ENCODE measurements at regions of chr5 and their contacts with region 1.

Region 1: DNA sequence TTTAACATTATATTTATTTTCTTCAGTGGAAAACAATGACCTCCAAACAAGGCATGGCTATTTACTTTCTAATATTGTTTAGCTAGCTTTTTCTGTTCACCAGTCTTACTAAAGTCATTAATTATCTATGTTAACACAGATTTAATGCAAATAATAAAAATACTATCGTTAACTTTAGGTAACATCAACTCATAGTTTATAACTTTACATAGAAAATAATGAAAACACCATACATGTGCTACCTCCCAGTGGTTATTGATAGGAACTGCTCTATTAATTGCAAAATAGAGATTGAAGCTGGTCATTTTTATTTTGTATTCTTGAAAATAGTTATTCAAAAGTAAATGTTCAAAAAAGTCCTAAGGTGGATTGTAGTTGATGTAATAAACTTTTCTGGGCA is 78.3 kb upstream of the HCN1 start:
- DNase-seq: no peak
- ATAC-seq: no peak

Region 2: GRCh38 chr5:44943647-44944046 is 830.9 kb before region 1 on chr5:
- intact Hi-C with region 1: loop called in 1 of 2 experiments (anchors 10 kb)
- DNase-seq: no peak
- ATAC-seq: no peak

Region 3: DNA sequence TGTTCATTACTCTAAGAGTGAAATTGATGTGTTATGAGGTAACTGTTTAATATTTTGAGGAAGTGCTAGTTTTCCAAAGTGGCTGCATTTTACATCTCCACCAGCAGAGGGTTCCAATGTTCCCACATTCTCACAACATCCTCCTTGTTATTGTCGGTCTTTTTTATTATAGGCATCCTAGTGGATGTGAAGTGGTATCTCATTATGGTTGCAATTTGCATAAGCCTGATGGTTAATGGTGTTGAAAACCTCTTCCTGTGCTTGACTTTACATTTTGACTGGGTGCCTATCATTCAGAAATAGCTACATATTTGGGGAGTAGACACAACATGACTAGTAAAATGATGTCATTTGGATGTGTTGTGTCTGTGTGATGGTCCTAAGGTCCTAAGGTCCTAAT is 822.2 kb before region 1 on chr5:
- intact Hi-C with region 1: loop called (anchors 2 to 10 kb)
- DNase-seq: no peak
- ATAC-seq: no peak

Region 4: GRCh38 chr5:45627076-45627656 is 147.4 kb before region 1 on chr5:
- intact Hi-C with region 1: no loop called
- DNase-seq: no peak
- ATAC-seq: no peak

Region 5: GRCh38 chr5:45741110-45741509 is 33.4 kb before region 1 on chr5:
- intact Hi-C with region 1: no loop called
- DNase-seq: peak; percentile 38
- ATAC-seq: peak; percentile 85 to 86

Measured in left cardiac atrium (tissue), 4 donors.